ENCODE measurements at regions of chr20 and their contacts with region 1.

Region 1: GRCh38 chr20:16541878-16542277 is 31.4 kb downstream of the KIF16B start:
- DNase-seq: no peak
- H3K4me3 ChIP-seq: no peak overlapping the region
- H3K27ac ChIP-seq: no peak overlapping the region
- H3K4me1 ChIP-seq: peaks cover 0 to 18% (median 10%) of the 10 kb centered on the region in 4 donors
- H3K27me3 ChIP-seq: no peaks in the 10 kb centered on the region
- CTCF ChIP-seq: no peak
- EP300 ChIP-seq: no peak
- POLR2A ChIP-seq: no peak

Region 2: DNA sequence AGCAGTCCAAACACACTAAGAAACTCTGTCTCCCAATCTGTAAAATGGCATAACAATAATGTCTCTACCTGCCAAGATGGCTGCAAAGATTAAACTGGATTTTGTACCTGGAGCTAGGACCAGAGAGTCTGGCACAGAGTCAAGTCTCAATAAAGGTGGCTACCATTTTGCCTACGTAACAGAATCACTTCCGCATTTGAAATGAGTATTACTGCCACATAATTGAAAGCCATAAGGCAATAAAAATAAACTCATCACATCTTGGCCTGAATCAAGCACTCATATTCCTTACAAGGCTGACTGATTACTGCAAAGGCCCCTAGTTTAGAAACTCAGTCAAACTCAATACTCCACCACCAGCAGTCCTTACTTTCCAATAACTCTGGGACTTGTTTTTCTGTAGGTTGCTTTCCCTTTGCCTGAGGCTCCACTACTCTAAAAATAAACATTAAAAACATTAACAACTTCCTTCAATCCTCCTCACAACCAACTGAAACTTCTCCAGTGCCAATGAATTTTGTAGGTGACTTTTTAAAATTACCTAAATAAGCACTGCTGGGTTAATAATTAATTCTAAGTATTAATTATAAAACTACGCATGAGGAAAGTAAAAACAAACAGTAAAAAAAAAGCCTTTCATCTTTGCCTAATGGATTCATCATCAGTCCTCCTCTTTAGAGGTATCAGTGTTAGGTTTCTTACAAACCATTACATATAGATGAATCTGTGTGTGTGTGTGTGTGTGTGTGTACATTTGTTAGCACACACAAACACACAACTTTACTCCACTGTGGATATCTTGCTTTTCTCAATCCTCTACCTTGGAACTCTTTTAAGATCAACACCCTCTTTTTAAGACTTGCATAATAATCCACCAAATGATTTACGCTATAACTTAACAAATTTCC is 27.6 kb after region 1 on chr20:
- in situ Hi-C with region 1: no loop called
- intact Hi-C with region 1: loop called (anchors 1 kb)
- DNase-seq: peak; percentile 53
- H3K4me3 ChIP-seq: no peak overlapping the region
- H3K27ac ChIP-seq: peak overlapping the region; percentile 49 to 73 (median 62)
- H3K4me1 ChIP-seq: peaks cover 2 to 56% (median 17%) of the 10 kb centered on the region in 4 donors
- H3K27me3 ChIP-seq: no peaks in the 10 kb centered on the region
- CTCF ChIP-seq: no peak
- EP300 ChIP-seq: no peak
- POLR2A ChIP-seq: no peak